Activated CD8-positive, alpha-beta T cell treated with anti-CD3 and anti-CD28 coated beads, Interleukin-2, amount 10 ng/mL, durations not matched to agents 7 days and 5 days (primary cell): ENCODE measurements at regions of chr12 and their contacts with region 1.

Region 1: GRCh38 chr12:6470375-6471163 is at the start of gene VAMP1:
- DNase-seq: peak; percentile 99
- ATAC-seq: peak; percentile 93
- H3K4me3 Mint-ChIP-seq: peak within 1 kb of the TSS; percentile 93
- H3K27ac Mint-ChIP-seq: peak within 1 kb of the TSS; percentile 93
- H3K4me1 Mint-ChIP-seq: peaks cover 56% of the 10 kb centered on the region
- H3K27me3 Mint-ChIP-seq: peaks cover 2% of the 10 kb centered on the region
- total RNA-seq, gene VAMP1: 46.6 to 48.9 TPM

Region 2: DNA sequence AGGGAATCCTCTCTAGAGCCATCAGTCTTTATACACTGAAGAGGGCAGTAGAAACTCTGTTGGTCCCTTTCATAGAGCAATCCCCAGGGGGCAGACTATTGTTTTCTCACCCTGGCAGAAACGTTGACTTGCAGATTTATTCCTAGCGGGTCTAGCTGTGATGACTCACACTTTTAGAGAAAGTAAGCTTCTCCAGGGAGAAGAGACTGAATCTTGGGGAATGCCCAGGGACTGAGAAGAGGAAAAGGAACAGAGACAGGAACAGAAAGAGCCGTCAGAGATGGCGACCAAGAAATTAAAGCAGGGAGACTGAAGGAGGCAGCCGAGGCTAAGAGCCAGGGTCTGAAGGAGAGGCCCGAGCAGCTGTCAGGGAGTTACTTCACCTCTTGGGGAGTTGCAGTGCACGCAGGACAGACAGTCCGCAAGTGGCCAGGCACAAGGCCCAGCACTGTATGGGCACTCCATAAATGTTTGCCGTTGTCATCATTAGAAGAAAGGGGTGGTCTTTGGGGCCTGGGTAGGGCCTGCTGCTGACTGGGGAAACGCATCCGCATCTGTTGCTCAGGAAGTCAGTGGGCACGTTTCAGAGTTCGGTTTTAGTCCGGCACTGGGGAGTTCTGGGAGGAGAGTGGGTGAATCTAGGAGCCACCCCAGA is 147.1 kb before region 1 on chr12:
- CTCF ChIA-PET with region 1: interaction called, 23 read pairs
- POLR2A ChIA-PET with region 1: no interaction called
- DNase-seq: peak; percentile 60
- ATAC-seq: peak; percentile 73
- H3K4me3 Mint-ChIP-seq: peak overlapping the region; percentile 45
- H3K27ac Mint-ChIP-seq: peak overlapping the region; percentile 87
- H3K4me1 Mint-ChIP-seq: peaks cover 62% of the 10 kb centered on the region
- H3K27me3 Mint-ChIP-seq: no peaks in the 10 kb centered on the region

Region 3: DNA sequence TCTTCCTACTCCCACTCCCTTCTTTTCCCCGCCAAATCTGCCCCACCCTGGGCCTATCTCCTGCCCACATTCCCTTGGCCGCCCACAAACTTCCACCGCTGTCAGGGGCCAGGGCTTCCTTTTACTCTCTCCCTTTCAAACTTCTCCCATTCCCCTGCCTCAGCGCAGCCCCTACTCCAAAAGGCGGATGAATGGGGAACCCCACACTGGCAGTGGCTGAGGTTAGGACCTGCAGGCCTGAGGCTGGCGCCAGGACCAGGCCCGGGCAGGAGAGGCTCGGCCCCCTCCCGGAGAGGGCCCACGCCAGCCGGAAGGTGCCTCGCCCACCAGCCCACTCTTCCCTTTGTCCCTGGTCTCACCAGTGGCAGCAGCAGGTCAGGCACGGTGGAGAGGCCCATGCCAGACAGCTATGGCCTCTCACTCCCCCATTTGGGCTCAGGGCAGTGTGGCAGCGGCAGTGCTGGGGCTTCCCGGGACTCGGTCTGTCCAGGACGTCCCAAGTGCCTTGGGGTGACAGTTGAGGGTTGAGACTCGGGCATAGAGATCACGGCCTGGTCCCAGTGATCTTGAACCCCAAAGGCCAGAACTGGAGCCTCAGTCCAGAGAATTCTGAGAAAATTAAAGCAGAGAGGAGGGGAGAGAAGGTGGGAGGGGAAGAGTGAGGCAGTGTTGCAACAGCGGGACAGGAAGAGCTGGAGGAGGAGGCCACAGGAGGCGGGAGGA is 129.0 kb before region 1 on chr12 and contains the start of gene TNFRSF1A:
- CTCF ChIA-PET with region 1: interaction called, 84 read pairs
- POLR2A ChIA-PET with region 1: interaction called, 16 read pairs
- DNase-seq: peak; percentile 67
- ATAC-seq: peak; percentile 43
- H3K4me3 Mint-ChIP-seq: no peak within 1 kb of the TSS
- H3K27ac Mint-ChIP-seq: no peak within 1 kb of the TSS
- H3K4me1 Mint-ChIP-seq: peaks cover 37% of the 10 kb centered on the region
- H3K27me3 Mint-ChIP-seq: no peaks in the 10 kb centered on the region
- total RNA-seq, gene TNFRSF1A: 58.8 to 63.4 TPM

Region 4: GRCh38 chr12:6443361-6443983 is 27.1 kb before region 1 on chr12:
- CTCF ChIA-PET with region 1: interaction called, 64 read pairs
- POLR2A ChIA-PET with region 1: interaction called, 39 read pairs
- DNase-seq: peak; percentile 49
- ATAC-seq: peak; percentile 29
- H3K4me3 Mint-ChIP-seq: peak overlapping the region; percentile 90
- H3K27ac Mint-ChIP-seq: peak overlapping the region; percentile 96
- H3K4me1 Mint-ChIP-seq: peaks cover 68% of the 10 kb centered on the region
- H3K27me3 Mint-ChIP-seq: no peaks in the 10 kb centered on the region

Region 5: GRCh38 chr12:6493497-6494257 is 23.1 kb after region 1 on chr12 and contains the start of gene NCAPD2:
- CTCF ChIA-PET with region 1: interaction called, 10 read pairs
- POLR2A ChIA-PET with region 1: interaction called, 48 read pairs
- DNase-seq: peak; percentile 98
- ATAC-seq: peak; percentile 89
- H3K4me3 Mint-ChIP-seq: peak within 1 kb of the TSS; percentile 93
- H3K27ac Mint-ChIP-seq: peak within 1 kb of the TSS; percentile 99
- H3K4me1 Mint-ChIP-seq: peaks cover 33% of the 10 kb centered on the region
- H3K27me3 Mint-ChIP-seq: no peaks in the 10 kb centered on the region
- total RNA-seq, gene NCAPD2: 195 to 201 TPM